ENCODE measurements at regions of chrX and their contacts with region 1.

Region 1: GRCh38 chrX:11533211-11533651 is 132.5 kb downstream of the ARHGAP6 start:
- DNase-seq: peak; percentile 76
- H3K4me3 ChIP-seq: no peak overlapping the region
- H3K27ac ChIP-seq: no peak overlapping the region
- H3K4me1 ChIP-seq: no peaks in the 10 kb centered on the region
- H3K27me3 ChIP-seq: no peaks in the 10 kb centered on the region

Region 2: DNA sequence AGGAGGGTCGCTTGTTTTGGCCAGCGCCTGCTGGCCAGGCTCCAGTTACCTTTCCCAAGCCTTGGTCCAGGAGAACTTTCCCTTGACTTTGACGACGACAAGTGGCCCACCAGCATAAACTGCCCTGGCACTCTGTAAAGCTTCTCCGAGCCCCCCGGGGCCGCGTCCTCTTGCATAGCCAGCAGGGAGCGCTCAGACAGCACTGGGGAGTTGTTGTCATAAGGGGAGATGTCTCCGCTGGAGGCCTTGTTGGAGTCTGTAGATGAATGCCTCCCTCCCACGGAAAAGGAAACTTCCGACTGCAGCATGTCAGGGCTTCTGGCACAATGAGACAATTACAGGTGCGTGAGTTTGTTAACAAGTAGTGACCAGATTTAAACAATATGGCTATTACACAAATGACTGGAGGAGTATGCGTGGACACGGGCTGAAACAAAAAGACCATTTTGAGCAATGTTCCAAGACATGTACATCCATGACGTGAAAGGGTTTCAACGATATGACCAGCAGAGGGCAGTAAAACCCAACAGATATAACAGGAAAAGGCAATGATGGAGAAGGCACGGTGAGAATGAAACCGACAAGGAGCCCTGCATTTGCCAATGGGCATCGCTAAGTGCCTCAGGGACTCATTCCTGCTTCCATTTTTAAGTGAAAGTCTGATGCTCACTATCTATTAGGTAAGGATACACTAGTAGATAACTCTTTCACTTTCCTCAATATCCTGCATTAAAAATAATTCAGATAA is 389.1 kb before region 1 on chrX:
- in situ Hi-C with region 1: loop called (anchors 10 kb)
- DNase-seq: peak; percentile 74
- H3K4me3 ChIP-seq: no peak overlapping the region
- H3K27ac ChIP-seq: no peak overlapping the region
- H3K4me1 ChIP-seq: no peaks in the 10 kb centered on the region
- H3K27me3 ChIP-seq: no peaks in the 10 kb centered on the region

Region 3: DNA sequence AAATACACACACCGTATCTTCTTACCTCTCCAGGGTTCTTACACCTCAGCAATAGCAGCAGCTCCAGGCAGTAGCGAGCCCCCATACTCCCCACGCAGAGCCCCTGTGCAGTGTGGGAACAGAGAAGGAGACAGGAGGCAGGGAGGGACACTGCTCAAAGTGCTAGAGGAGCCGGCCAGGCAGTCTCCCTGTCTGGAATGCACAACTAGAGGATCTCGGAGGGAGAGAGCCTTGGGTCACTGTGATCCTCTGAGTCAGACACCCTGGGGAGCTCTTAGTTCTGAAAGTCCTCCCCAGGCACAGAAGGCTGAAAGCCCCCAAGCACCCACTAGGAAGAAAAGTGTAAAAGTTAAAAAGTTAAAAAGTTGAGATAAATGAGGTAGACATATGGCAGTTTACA is 224.0 kb before region 1 on chrX:
- in situ Hi-C with region 1: no loop called
- DNase-seq: peak; percentile 25
- H3K4me3 ChIP-seq: no peak overlapping the region
- H3K27ac ChIP-seq: no peak overlapping the region
- H3K4me1 ChIP-seq: no peaks in the 10 kb centered on the region
- H3K27me3 ChIP-seq: no peaks in the 10 kb centered on the region

Region 4: DNA sequence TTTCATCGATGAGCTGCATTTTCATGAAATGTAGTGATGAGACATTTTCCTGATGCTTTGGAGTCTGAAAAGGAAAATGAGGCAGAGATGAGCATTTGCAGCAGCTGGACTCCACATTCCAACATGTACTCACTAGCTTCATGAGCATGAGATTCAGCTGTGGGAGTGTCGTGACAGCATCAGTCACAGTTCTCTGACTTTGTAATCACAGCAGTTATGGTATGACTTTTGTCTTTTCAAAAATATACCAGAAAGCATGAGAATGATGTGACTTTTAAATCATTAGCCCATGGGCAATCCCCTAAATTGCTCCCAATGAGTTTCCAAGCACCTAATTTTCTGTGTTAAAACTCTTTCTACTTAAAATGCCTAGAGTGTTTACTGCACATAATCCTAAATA is 206.5 kb after region 1 on chrX:
- in situ Hi-C with region 1: loop called (anchors 10 kb)
- DNase-seq: no peak
- H3K4me3 ChIP-seq: no peak overlapping the region
- H3K27ac ChIP-seq: no peak overlapping the region
- H3K4me1 ChIP-seq: no peaks in the 10 kb centered on the region
- H3K27me3 ChIP-seq: no peaks in the 10 kb centered on the region

Measured in GM23248 (cell line).